ENCODE measurements at regions of chr11 and their contacts with region 1.

Region 1: GRCh38 chr11:110077831-110078325 is 15.3 kb upstream of the ZC3H12C start:
- DNase-seq: peak; percentile 86
- ATAC-seq: peak; percentile 92
- H3K4me3 Mint-ChIP-seq: peak overlapping the region; percentile 43
- H3K27ac Mint-ChIP-seq: peak overlapping the region; percentile 93
- H3K4me1 Mint-ChIP-seq: peaks cover 41% of the 10 kb centered on the region
- H3K27me3 Mint-ChIP-seq: peaks cover 8% of the 10 kb centered on the region

Region 2: GRCh38 chr11:110092515-110093404 is 14.9 kb after region 1 on chr11 and contains the start of gene ZC3H12C:
- CTCF ChIA-PET with region 1: interaction called, 11 read pairs
- DNase-seq: peak; percentile 72
- ATAC-seq: peak; percentile 86
- H3K4me3 Mint-ChIP-seq: peak within 1 kb of the TSS; percentile 80
- H3K27ac Mint-ChIP-seq: peak within 1 kb of the TSS; percentile 77
- H3K4me1 Mint-ChIP-seq: peaks cover 19% of the 10 kb centered on the region
- H3K27me3 Mint-ChIP-seq: peaks cover 57% of the 10 kb centered on the region
- total RNA-seq, gene ZC3H12C: 2.8 to 12.2 TPM